Right ventricle myocardium superior (tissue), 1 donor: ENCODE measurements at regions of chrX and their contacts with region 1.

Region 1: DNA sequence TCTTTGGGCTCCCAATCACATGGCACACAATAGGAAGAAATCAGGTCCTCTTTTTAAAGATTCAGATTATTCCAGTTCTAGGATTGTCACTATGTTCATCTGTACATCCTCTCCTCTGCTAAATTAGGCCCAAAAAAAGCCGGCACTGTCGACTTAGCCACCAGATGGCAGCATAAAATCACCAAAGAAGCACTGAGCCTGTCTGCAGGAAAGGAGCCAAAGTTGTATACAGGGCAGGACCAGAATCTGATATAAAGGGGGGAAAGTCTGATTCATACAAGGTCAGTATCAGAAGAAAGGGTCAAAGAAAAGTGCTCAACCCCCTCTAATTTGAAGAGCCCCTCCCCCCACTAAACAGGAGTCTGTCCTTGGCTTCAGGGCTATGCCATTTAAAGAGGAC is 292.5 kb downstream of the CHIC1 start:
- DNase-seq: peak; percentile 45
- ATAC-seq: peak; percentile 52

Region 2: GRCh38 chrX:73366696-73367095 is 488.9 kb before region 1 on chrX:
- intact Hi-C with region 1: no loop called
- DNase-seq: no peak
- ATAC-seq: no peak

Region 3: GRCh38 chrX:74015379-74016019 is 160.0 kb after region 1 on chrX:
- intact Hi-C with region 1: loop called (anchors 5 kb)
- DNase-seq: peak; percentile 38
- ATAC-seq: peak; percentile 64

Region 4: DNA sequence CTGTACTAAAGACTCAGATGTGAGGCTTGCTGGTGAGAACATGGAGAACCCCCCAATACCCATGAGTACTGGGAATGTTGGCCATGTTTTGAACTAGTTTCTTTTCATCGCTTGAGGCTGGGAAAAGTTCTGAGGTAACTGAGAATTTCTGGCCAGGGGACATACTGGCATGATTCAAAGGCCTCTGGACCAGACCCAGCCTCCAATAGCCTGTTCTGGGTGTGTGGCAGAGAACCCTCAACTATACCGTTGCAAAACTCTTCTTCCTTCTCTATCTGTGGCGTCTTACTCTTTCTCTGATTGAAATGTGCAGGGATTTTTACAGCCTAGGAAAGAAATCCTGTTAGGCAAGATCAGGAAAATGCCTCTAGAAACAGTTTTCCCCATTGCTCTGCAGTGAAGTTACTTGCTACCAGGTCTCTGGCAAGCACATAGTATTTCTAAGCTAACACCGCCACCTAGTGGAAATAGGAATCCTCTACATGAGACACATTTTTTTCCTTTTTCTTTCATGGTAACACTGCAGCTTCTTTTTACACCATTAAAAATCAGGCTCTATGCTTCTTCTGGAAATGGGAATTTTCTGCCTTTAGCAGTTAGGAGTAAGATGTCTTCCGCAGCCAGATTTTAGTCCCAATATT is 277.7 kb after region 1 on chrX:
- intact Hi-C with region 1: loop called (anchors 5 kb)
- DNase-seq: no peak
- ATAC-seq: peak; percentile 65